ENCODE measurements at regions of chr4 and their contacts with region 1.

Region 1: DNA sequence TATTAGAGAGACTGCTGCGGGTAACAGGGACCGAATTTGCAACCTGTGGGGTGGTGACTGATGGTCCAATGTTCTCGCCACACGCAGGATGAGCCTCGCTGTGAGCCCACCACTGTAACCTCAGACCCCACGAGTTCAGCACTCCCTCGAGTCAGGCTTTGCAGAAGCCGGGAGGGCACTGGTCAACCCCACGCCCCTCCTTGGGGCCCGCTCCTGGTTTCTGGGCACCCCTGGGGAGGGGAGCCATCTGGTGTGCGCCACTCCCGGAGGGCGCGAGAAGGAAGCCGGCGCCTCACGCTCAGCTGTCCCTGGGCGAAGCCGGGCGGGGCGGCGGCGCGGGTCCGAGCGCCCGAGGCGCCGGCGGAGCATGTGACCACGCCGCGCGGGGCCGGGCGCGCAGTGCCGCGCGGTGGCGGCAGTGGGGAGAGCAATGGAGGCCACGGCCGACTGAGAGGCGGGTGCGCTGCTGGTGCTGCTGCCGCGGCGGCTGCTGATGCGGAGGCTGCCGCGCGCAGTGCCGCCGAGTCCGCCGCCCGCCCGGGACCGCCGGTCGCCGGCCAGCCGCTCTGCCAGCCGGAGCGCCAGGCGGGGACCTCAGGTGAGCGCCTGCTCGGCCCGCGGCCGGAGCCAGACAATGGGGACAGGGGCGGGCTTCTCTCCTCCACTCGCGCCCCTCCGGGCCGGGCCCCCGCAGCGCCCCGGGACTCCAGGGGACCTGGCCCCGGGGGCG is 100.1 kb downstream of the CEP135 start:
- DNase-seq: peak; percentile 2 to 81
- H3K4me3 ChIP-seq: peak overlapping the region; percentile 83 to 95 (median 88)
- H3K27ac ChIP-seq: peak overlapping the region; percentile 84
- H3K4me1 ChIP-seq: peaks cover 0 to 5% (median 3%) of the 10 kb centered on the region in 4 experiments; a peak in 2 of 7 replicates
- H3K27me3 ChIP-seq: no peaks in the 10 kb centered on the region
- CTCF ChIP-seq: peak in 2 of 3 experiments; percentile 39 to 61; a peak in 3 of 4 replicates
- EP300 ChIP-seq: no peak
- POLR2A ChIP-seq: peak in 1 of 2 experiments; percentile 78
- RAD21 ChIP-seq: peak; percentile 32 to 51; a peak in 3 of 4 replicates

Region 2: GRCh38 chr4:56066493-56066892 is 17.6 kb after region 1 on chr4:
- CTCF ChIA-PET with region 1: interaction called, 5 read pairs
- POLR2A ChIA-PET with region 1: interaction called, 11 read pairs
- DNase-seq: no peak
- H3K4me3 ChIP-seq: no peak overlapping the region
- H3K27ac ChIP-seq: no peak overlapping the region
- H3K4me1 ChIP-seq: no peaks in the 10 kb centered on the region
- H3K27me3 ChIP-seq: no peaks in the 10 kb centered on the region
- CTCF ChIP-seq: no peak
- EP300 ChIP-seq: no peak
- POLR2A ChIP-seq: no peak
- RAD21 ChIP-seq: no peak

Region 3: GRCh38 chr4:56372774-56373173 is 323.9 kb after region 1 on chr4:
- CTCF ChIA-PET with region 1: no interaction called
- POLR2A ChIA-PET with region 1: no interaction called
- DNase-seq: no peak
- H3K4me3 ChIP-seq: no peak overlapping the region
- H3K27ac ChIP-seq: no peak overlapping the region
- H3K4me1 ChIP-seq: no peaks in the 10 kb centered on the region
- H3K27me3 ChIP-seq: no peaks in the 10 kb centered on the region
- CTCF ChIP-seq: no peak
- EP300 ChIP-seq: no peak
- POLR2A ChIP-seq: no peak
- RAD21 ChIP-seq: no peak